Psoas muscle (tissue), 8 donors: ENCODE measurements at regions of chr12 and their contacts with region 1.

Region 1: DNA sequence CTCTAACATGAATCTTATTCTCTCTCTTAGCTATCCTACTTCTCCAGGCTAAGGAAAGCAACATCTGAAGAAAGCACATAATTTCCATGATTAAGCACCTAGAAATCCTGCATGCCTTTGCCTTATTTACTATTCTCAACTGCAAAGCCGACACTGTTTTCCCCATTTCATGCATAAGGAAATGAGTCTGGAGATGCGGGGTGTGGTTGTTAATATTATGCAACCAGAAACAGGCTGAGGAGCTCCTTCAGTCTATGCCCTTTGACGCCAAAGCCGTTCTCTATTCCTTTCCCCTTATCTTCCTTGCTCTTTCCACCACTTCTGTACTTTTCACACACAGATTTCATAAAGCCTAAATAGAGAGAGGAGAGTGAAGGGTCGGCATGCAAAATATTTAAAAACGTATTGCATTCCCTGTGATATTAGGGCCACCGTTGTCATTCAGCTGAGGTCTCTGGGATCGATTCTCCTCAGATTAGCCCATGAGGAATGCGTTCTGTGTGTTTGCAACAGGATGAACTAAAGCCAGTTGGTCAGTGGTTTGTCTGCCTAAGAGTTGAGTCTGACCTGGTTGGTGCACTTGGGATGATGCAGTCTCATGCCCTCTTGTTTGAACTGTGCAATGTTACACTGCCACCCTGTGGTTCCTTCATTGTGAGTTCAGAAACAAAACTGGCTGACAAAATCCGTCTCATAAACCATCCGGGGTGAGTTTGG is 53.1 kb upstream of the PLEKHG7 start:
- DNase-seq: no peak
- ATAC-seq: peak; percentile 83 to 91 (median 87)
- H3K4me3 ChIP-seq: no peak overlapping the region
- H3K27ac ChIP-seq: no peak overlapping the region
- H3K4me1 ChIP-seq: no peaks in the 10 kb centered on the region
- H3K27me3 ChIP-seq: no peaks in the 10 kb centered on the region
- CTCF ChIP-seq: peak; percentile 66

Region 2: GRCh38 chr12:91361864-91362263 is 1287.8 kb before region 1 on chr12:
- intact Hi-C with region 1: loop called in 1 of 2 experiments (anchors 5 kb)
- DNase-seq: no peak
- ATAC-seq: peak in 1 of 4 donors; percentile 65
- H3K4me3 ChIP-seq: no peak overlapping the region
- H3K27ac ChIP-seq: no peak overlapping the region
- H3K4me1 ChIP-seq: no peaks in the 10 kb centered on the region
- H3K27me3 ChIP-seq: no peaks in the 10 kb centered on the region
- CTCF ChIP-seq: peak; percentile 64

Region 3: DNA sequence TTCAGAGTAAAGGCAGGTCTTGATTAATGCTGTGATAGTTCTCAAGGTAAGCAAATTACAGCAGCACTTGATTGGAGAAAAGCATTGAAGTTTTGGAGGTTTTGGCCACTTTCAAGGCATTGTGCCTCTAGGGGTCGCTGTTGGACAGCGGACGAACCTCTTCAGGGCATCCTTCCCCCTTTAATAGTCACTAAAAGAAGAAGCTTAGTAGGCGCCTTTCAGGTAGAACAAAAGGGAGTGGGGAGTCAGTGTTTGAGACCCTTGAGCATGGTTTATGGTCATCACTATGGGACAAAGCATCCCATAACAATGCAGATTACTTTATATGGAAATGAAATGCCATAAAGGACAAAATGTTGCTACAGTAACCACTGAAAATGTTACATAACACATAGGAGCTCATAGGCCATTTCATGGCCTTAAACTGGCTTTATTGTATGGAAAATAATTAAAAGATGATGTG is 1267.6 kb before region 1 on chr12:
- intact Hi-C with region 1: loop called (anchors 5 kb)
- DNase-seq: peak; percentile 77 to 84
- ATAC-seq: peak; percentile 68 to 88 (median 78)
- H3K4me3 ChIP-seq: peak overlapping the region; percentile 66
- H3K27ac ChIP-seq: peak overlapping the region; percentile 65
- H3K4me1 ChIP-seq: peaks cover 5% of the 10 kb centered on the region
- H3K27me3 ChIP-seq: no peaks in the 10 kb centered on the region
- CTCF ChIP-seq: peak; percentile 89